ENCODE measurements at regions of chr22 and their contacts with region 1.

Region 1: DNA sequence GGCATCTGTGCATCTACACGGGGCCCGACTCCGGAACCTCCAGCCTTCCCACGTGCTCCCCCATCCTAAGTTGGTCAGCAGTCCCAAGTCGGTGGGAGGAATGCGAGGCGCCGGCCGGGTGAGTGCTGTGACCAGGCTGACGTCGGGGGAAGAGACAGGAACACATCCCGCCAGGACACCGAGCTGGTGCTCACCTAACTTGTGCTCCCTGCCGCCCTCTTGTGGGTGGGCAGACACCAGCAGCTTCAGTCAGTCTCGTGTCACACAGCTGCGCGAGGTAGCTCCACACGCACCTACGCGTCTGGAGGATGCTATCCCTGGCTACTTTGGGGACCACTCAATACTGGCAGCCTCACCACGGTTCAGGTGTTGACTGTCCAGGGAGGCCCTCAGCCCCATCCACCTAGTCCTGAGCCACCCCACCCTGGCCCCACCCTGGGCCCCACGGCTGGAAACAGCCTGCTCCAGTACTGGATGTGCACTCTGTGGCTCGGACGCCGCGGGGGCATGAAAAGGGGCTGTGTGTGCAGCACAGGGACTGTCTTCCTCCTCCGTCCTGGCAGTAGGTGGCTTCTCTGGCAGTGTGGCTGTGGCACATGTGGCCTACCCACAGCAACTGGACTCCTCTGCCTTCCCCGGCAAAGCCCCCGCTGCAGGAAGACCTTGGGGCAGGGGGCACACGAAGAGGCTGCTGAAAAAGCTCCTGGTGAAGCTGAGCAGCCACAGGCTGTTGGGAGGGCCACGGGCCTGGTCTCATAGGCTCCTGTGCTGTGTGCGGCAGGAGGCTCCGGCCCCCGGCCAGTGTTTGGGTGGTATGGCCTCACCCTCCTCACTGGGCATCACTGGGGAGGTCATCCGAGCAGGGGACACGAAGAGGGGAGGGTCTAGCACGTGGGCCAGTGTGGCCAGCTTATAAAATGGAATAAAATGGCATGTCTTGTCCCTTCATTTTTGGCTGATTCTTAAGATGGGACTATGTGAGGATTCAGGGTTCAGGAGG is 11.2 kb upstream of the BID start:
- DNase-seq: no peak
- CTCF ChIP-seq: peak; percentile 81

Region 2: DNA sequence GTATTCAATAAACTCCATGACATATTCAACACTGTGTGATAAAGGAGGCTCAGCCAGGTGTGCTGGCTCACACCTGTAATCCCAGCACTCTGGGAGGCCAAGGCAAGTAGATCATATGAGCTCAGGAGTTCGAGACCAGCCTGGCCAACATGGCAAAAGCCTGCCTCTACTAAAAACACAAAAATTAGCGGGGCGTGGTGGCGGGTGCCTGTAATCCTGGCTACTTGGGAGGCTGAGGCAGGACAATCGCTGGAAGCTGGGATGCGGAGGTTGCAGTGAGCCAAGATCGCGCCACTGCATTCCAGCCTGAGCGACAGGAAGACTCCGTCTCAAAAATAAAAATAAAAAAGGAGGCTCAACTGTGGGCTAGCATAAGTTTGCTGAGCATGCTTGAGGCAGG is 226.3 kb before region 1 on chr22:
- CTCF ChIA-PET with region 1: interaction called, 14 read pairs
- POLR2A ChIA-PET with region 1: no interaction called
- DNase-seq: no peak
- CTCF ChIP-seq: no peak

Region 3: GRCh38 chr22:17655289-17655688 is 130.2 kb before region 1 on chr22:
- CTCF ChIA-PET with region 1: no interaction called
- POLR2A ChIA-PET with region 1: no interaction called
- DNase-seq: no peak
- CTCF ChIP-seq: no peak

Region 4: DNA sequence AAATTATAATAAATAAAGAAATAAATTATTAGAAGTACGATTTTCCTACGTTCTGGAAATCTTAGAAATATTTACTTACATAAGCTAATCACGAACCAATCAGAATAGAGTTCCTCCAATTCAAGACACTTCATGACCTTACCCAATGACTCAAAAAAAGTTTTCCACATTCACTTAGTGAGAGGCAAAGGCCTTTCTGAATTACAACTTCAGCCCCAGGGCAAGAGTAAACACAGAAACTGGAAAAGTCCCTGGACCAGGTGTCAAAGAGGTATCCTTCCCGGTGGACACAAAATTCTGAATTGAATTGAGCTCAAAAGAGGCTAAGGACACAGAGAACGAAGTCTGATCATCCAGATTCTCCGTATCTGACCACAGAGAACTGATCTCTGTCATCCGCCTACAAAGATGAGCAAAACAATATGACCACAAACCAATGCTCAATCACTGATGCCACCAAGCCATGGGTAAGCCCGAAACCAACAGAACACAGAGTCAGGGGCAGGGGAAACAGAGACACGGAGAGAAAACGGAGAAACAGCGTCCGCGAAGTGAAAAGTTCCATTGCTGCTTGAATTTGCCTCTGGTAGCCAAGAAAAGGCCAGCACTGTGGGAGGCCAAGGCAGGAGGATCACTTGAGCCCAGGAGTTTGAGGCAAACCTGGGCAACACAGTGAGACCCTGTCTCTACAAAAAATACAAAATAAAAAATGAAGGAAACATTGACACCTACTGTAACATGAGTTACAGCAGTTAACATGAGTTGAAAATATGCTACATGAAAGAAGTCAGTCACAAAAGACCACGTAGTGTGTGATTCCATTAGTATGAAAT is 18.0 kb before region 1 on chr22:
- CTCF ChIA-PET with region 1: interaction called, 11 read pairs
- POLR2A ChIA-PET with region 1: interaction called, 4 read pairs
- DNase-seq: peak; percentile 67
- CTCF ChIP-seq: no peak

Region 5: GRCh38 chr22:17773606-17774205 is 11.8 kb before region 1 on chr22:
- CTCF ChIA-PET with region 1: interaction called, 11 read pairs
- POLR2A ChIA-PET with region 1: interaction called, 4 read pairs
- DNase-seq: peak; percentile 68
- CTCF ChIP-seq: no peak

Region 6: DNA sequence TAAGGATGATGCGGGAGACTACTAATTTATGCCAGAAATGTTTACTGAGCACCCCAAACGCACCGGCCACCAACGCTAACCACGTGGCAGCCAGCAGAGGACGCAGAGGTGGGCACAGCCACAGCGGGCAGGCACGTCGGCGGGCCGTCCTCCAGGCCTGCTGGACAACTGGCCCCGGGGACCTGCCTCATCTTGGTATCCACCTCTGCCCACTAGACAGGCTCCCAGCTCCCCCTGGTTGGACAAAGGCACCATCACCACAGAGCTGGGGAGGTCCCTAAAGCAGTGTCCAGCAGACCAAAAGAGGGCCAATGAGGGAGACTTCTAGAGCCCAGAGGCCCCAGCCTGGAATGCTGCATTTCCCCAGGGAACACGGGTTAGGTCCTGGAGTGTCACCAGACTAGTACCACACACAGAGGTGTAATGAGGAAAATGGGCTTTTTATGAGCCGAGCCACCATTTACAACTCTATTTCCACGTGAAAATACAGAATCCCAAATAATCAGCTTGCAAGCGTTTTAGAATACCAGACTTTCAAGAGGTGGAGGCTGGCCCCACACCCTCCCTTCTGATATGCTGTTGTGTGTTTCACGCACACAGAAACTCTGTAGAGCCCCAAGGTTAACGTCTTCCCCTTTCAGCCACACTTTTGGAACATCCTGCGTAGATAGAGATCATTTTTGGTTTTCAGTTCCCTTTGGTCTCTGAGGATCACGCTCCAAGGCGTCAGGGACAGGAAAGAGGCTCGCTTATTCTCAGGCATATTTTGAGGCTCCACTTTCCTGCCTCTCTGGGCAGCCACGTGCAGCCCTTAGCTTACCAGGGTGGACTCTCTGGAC is 12.5 kb after region 1 on chr22:
- CTCF ChIA-PET with region 1: interaction called, 68 read pairs
- POLR2A ChIA-PET with region 1: interaction called, 16 read pairs
- DNase-seq: peak; percentile 78
- CTCF ChIP-seq: no peak

Region 7: DNA sequence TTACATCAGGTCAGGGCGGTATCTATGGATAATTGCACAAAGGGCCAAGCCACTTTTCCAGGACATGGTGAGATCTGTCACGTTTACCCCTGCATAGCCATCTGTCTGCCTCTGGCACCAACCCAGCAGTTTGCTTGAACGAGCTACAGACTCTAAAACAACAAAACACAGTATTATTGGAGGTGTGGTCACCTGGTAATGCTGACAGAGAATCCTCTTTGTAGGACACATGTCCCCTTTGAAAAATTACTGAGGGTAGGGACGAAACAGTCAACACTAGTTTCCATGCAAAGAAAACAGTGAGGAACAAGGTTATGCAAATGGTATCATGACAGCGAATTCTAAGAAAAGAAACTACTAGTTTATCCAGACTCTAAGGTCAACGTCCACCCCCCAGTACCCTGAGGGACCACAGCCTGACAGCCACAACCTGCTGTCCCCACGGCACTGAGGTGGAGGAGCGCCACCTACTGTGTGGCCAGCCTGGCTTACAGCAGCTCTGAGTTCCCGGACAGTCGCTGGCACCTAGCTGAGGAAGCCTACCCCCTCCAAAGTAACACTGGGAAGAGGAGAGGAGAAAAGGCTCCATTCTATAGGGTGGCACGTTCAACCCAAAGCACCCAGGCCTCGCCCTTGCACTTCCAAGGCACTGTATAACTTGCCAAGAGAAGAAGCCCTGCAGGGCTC is 106.1 kb after region 1 on chr22:
- CTCF ChIA-PET with region 1: no interaction called
- POLR2A ChIA-PET with region 1: no interaction called
- DNase-seq: peak; percentile 45
- CTCF ChIP-seq: peak; percentile 47

Measured in GM10248 (cell line).